ENCODE measurements at regions of chr10 and their contacts with region 1.

Region 1: DNA sequence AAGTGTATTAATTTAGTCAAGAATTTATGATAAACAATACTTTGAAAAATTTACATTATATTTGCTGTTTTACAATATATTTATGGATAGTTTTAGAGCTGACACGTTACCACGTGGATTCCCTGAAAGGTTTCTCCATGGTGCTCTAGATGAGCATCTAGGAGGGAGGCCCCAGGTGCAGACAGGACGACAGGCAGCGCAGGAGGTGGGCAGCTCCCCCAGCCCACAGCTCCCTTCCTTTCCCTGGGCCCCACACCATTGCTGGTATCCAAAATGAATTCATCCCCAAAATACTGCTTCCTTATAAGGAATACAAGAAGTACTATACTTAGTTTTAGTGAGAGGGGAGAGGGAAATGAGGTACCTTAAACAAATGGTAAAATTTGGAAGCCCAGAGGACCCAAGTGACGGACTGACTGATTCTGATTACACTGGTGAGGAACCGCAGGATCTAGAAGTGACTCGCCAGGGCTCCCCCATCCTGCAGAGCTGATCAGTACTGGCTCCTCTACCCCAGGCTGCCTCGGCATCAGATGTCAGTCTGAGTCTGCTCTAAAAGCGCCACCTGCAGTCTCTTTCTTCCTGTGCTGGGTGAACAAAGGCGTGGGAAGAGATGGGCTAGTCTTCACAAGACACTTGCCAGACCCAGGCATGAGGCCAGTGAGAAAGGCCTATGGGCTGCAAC is 89.2 kb downstream of the DLG5 start:
- DNase-seq: peak; percentile 73
- H3K4me3 Mint-ChIP-seq: no peak overlapping the region
- H3K27ac Mint-ChIP-seq: peak overlapping the region; percentile 84
- H3K4me1 Mint-ChIP-seq: peaks cover 17% of the 10 kb centered on the region
- H3K27me3 Mint-ChIP-seq: no peaks in the 10 kb centered on the region

Region 2: DNA sequence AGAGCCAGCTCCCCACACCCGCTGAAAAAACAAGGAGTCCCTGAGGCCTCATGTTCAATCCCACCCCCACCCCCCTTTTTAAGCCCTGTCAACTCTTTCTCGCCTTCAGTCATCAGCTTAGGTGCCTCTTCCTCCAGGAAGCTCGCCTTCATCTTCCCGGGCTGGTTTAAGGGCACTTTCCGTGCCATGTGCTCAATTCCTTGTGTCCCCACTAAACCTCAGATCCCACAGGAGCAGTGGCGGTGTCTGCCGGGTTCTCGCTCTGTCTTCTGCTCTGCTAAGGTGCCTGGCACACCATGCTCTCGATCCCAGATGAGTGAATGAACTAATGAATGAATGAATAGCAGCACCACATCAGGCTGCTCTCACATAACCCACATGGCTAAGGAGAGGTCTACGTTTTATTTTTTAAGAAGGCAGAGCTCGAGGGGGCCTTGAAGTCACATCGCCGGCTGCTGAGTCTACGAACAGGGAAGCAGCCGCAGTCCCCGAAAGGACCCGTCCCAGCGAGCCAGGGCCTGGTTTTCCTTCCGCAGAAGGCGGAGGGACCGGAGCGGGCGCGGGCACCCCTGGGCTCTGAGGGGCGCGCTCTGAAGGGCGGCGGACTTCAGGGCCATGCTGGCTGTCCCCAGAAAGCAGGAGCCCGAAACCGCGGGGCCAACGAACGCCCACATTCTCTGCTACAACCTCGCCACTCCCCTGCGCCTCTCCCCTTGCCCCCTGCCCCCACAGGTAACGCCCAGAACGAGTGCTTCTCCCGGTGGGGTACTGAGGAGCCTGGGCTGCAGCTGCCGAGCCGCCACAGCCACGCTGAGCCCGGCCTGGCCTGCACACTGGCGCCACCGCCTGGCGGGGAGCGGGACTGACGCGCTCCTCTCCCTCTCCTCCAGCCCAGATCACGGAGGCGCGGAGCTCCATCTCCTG is 126.4 kb before region 1 on chr10:
- CTCF ChIA-PET with region 1: interaction called, 18 read pairs
- POLR2A ChIA-PET with region 1: no interaction called
- DNase-seq: peak; percentile 66
- H3K4me3 Mint-ChIP-seq: no peak overlapping the region
- H3K27ac Mint-ChIP-seq: no peak overlapping the region
- H3K4me1 Mint-ChIP-seq: peaks cover 3% of the 10 kb centered on the region
- H3K27me3 Mint-ChIP-seq: peaks cover 20% of the 10 kb centered on the region

Region 3: GRCh38 chr10:77959384-77959783 is 122.0 kb after region 1 on chr10:
- CTCF ChIA-PET with region 1: no interaction called
- POLR2A ChIA-PET with region 1: no interaction called
- DNase-seq: no peak
- H3K4me3 Mint-ChIP-seq: no peak overlapping the region
- H3K27ac Mint-ChIP-seq: no peak overlapping the region
- H3K4me1 Mint-ChIP-seq: no peaks in the 10 kb centered on the region
- H3K27me3 Mint-ChIP-seq: no peaks in the 10 kb centered on the region